Activated naive CD4-positive, alpha-beta T cell treated with anti-CD3 and anti-CD28 coated beads for 36 hours (primary cell): ENCODE measurements at regions of chr1 and their contacts with region 1.

Region 1: GRCh38 chr1:204411451-204412204 is at the start of gene PPP1R15B:
- DNase-seq: peak; percentile 97
- H3K4me3 Mint-ChIP-seq: peak within 1 kb of the TSS; percentile 99
- H3K27ac Mint-ChIP-seq: peak within 1 kb of the TSS; percentile 99
- H3K4me1 Mint-ChIP-seq: peaks cover 8% of the 10 kb centered on the region
- H3K27me3 Mint-ChIP-seq: no peaks in the 10 kb centered on the region
- total RNA-seq, gene PPP1R15B: 63.7 to 65.6 TPM

Region 2: GRCh38 chr1:203861379-203862184 is 550.0 kb before region 1 on chr1 and contains the start of gene SNRPE:
- CTCF ChIA-PET with region 1: no interaction called
- intact Hi-C with region 1: loop called (anchors 2 kb)
- DNase-seq: peak; percentile 98
- H3K4me3 Mint-ChIP-seq: peak within 1 kb of the TSS; percentile 100
- H3K27ac Mint-ChIP-seq: peak within 1 kb of the TSS; percentile 95
- H3K4me1 Mint-ChIP-seq: peaks cover 25% of the 10 kb centered on the region
- H3K27me3 Mint-ChIP-seq: no peaks in the 10 kb centered on the region
- total RNA-seq, gene SNRPE: 366 to 370 TPM

Region 3: GRCh38 chr1:204398217-204399081 is 13.2 kb before region 1 on chr1:
- CTCF ChIA-PET with region 1: interaction called, 26 read pairs
- intact Hi-C with region 1: no loop called
- DNase-seq: peak; percentile 73
- H3K4me3 Mint-ChIP-seq: no peak overlapping the region
- H3K27ac Mint-ChIP-seq: peak overlapping the region; percentile 87
- H3K4me1 Mint-ChIP-seq: peaks cover 10% of the 10 kb centered on the region
- H3K27me3 Mint-ChIP-seq: no peaks in the 10 kb centered on the region

Region 4: DNA sequence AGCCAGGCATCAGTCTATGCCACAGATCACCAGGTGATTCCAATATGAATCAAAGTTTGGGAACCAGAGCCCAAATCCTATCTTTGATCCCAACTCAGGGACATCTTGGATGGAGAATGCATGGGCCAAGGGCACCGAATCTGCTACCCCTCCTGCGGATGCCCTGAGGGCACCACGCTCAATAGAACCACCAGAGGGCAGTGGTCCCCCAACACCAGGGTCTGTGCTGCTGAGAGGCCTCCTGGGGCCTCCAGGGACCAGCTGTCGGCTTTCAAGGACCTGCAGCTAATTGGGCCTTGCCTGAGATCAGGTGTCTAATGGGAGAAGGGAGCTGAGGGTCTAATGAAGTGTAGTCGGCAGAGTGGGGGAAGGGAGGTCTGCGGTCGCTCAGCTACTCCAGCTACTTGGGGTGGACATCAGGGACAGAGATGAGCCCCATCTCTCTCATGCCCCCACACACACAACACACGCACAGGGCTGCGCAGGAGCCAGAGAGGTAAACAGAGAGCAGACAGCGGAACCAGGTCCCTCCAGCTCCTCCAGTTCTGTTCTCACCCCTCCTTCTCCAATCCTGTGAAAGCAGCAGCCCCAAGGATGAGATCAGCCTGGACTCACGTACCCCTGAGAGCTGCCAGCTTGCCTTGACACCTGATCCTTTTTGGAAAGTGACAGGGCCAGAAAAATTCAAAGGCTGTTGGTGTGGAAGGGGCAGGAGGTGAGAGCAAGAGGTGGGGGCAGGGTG is 34.9 kb after region 1 on chr1:
- CTCF ChIA-PET with region 1: interaction called, 7 read pairs
- intact Hi-C with region 1: loop called (anchors 2 kb)
- DNase-seq: peak; percentile 88
- H3K4me3 Mint-ChIP-seq: no peak overlapping the region
- H3K27ac Mint-ChIP-seq: peak overlapping the region; percentile 77
- H3K4me1 Mint-ChIP-seq: peaks cover 54% of the 10 kb centered on the region
- H3K27me3 Mint-ChIP-seq: no peaks in the 10 kb centered on the region

Region 5: GRCh38 chr1:204494281-204495077 is 82.9 kb after region 1 on chr1 and contains the start of gene PIK3C2B:
- CTCF ChIA-PET with region 1: interaction called, 3 read pairs
- intact Hi-C with region 1: loop called (anchors 1 kb)
- DNase-seq: peak; percentile 85
- H3K4me3 Mint-ChIP-seq: peak within 1 kb of the TSS; percentile 90
- H3K27ac Mint-ChIP-seq: peak within 1 kb of the TSS; percentile 94
- H3K4me1 Mint-ChIP-seq: peaks cover 58% of the 10 kb centered on the region
- H3K27me3 Mint-ChIP-seq: no peaks in the 10 kb centered on the region
- total RNA-seq, gene PIK3C2B: 61.0 to 65.4 TPM

Region 6: DNA sequence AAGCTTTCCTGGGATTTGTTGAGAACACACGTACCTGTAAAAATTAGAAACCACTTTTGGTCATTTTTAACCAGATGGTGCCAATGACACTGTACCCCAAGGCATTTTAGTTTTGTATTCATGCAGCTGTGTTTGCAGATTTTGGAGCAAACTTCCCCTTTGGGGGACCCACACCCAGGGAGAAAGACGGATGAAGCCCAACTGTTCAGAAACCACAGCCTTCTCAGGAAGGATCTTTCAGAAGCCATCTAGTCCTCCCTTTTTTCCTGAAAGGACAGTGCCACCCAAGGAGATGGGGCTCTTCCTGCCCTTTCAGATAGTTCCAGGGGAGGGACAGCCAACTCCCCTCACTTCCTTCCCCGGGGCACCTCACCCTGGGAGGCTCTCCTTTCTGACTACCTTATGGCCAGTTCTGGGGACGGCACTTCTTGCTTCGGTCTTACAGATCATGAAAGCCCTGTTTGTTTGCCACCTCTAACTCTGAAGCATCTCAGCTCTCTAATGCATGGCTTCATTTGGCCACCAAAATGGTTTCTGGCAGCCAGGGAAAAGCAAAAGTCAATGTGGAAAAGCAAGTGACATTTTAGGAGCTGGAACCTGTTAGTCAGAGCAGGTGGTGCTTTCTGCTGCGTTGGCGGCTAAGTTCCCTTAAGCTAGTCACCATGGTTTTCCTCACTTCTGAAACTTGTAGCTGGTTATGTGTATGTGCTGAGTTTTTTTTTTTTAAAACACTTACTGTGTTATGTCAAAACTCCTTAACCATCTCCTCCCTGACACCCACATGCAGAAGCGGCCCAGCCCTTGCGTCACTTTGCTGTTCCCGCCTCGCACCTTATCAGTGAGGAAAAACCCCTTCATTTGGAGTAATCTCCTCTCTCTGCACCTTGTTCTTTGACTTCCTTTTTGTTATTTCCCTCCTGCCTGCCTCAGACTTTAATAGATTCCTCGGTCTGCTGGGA is 826.2 kb after region 1 on chr1:
- CTCF ChIA-PET with region 1: no interaction called
- intact Hi-C with region 1: loop called (anchors 10 kb)
- DNase-seq: peak; percentile 92
- H3K4me3 Mint-ChIP-seq: peak overlapping the region; percentile 44
- H3K27ac Mint-ChIP-seq: peak overlapping the region; percentile 98
- H3K4me1 Mint-ChIP-seq: peaks cover 77% of the 10 kb centered on the region
- H3K27me3 Mint-ChIP-seq: no peaks in the 10 kb centered on the region